GM10248 (cell line): ENCODE measurements at regions of chr16 and their contacts with region 1.

Region 1: GRCh38 chr16:10509534-10510025 is 70.8 kb downstream of the EMP2 start:
- DNase-seq: peak; percentile 80
- CTCF ChIP-seq: peak; percentile 73

Region 2: GRCh38 chr16:10256784-10257641 is 252.6 kb before region 1 on chr16:
- CTCF ChIA-PET with region 1: interaction called, 108 read pairs
- POLR2A ChIA-PET with region 1: no interaction called
- DNase-seq: peak; percentile 80
- CTCF ChIP-seq: peak; percentile 42

Region 3: GRCh38 chr16:10494343-10495028 is 15.1 kb before region 1 on chr16:
- CTCF ChIA-PET with region 1: interaction called, 12 read pairs
- POLR2A ChIA-PET with region 1: no interaction called
- DNase-seq: no peak
- CTCF ChIP-seq: no peak

Region 4: GRCh38 chr16:10584981-10585438 is 75.4 kb after region 1 on chr16:
- CTCF ChIA-PET with region 1: no interaction called
- POLR2A ChIA-PET with region 1: no interaction called
- DNase-seq: no peak
- CTCF ChIP-seq: no peak

Region 5: DNA sequence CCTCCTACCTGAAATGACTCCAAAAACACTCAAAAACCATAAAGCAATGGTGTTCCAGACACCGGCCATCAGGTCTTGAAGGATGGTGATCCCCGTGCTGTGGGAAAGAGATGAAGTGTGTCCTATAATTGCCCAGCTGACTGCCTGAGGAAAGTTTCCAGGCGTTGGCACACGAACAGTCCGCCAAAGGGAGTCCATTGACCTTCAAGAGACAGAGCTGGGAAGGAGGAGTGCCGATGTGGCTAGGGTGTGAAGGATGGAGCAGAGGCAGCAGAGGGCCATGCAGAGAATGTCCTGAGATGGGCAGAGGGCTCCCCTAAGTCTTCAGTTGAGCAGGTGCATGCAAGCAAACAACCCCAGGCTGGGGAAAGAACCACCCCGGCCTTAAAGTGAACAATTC is 222.2 kb after region 1 on chr16:
- CTCF ChIA-PET with region 1: interaction called, 101 read pairs
- POLR2A ChIA-PET with region 1: no interaction called
- DNase-seq: no peak
- CTCF ChIP-seq: no peak

Region 6: GRCh38 chr16:10743610-10744393 is 234.2 kb after region 1 on chr16 and contains the start of gene NUBP1:
- CTCF ChIA-PET with region 1: interaction called, 11 read pairs
- POLR2A ChIA-PET with region 1: interaction called, 4 read pairs
- DNase-seq: peak; percentile 97
- CTCF ChIP-seq: no peak

Region 7: GRCh38 chr16:10754941-10755340 is 245.4 kb after region 1 on chr16:
- CTCF ChIA-PET with region 1: no interaction called
- POLR2A ChIA-PET with region 1: no interaction called
- DNase-seq: no peak
- CTCF ChIP-seq: no peak